SK-N-SH (cell line): ENCODE measurements at regions of chr12 and their contacts with region 1.

Region 1: GRCh38 chr12:65232476-65233077 is 45.9 kb upstream of the MSRB3 start:
- DNase-seq: peak; percentile 12
- H3K4me3 ChIP-seq: no peak overlapping the region
- H3K27ac ChIP-seq: no peak overlapping the region
- H3K4me1 ChIP-seq: no peaks in the 10 kb centered on the region; a peak in 1 of 4 replicates
- H3K27me3 ChIP-seq: no peaks in the 10 kb centered on the region
- CTCF ChIP-seq: peak; percentile 65
- EP300 ChIP-seq: no peak
- RAD21 ChIP-seq: peak; percentile 53

Region 2: DNA sequence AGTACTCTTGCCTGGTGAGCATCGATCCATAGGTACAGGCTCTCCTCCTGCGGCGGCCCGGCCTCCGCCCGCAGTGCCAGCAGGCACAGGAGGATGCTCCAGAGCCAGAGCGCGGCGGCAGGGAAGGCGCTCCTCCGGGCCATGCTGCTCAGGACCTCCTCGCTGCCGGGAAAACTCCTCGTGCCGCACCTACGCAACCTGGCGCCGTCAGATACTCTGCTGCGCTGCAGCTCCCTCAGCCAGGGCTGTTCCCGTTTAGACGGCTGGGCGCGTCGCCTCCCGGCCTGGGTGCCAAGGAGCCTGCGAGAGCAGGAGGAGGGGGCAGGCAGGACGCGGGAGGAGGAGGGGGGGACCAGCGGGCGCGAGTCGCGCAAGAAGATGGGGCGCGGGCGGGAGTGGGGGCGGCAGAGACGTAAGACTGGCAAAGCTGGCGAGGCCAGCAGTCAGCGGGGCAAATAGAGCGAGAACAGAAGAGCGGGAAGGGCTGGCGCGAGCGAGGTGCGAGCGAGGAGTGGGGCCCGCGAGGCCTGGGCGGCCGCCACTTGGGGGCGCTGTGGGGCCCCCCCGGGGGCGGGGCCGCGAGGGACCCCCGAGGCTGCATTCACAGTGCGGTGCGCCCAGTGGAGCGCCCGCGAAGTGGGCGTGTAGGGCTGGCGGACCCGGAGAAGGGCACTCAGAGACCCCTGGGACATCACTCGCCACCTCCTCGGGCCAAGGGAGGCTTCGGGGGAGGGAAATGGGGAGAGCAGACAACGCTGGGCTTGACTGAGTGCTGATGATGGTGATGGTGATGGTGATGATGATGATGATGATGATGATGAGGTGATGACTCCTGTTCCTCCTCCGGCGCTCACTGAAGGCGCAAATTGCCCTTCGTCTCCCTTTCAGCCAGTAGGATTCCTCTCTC is 111.3 kb before region 1 on chr12 and contains the start of gene WIF1:
- CTCF ChIA-PET with region 1: interaction called, 14 read pairs
- POLR2A ChIA-PET with region 1: no interaction called
- DNase-seq: peak; percentile 69
- H3K4me3 ChIP-seq: peak within 1 kb of the TSS; percentile 14 to 37; a peak in 3 of 4 replicates
- H3K27ac ChIP-seq: no peak within 1 kb of the TSS
- H3K4me1 ChIP-seq: no peaks in the 10 kb centered on the region; a peak in 1 of 4 replicates
- H3K27me3 ChIP-seq: peaks cover 68% of the 10 kb centered on the region
- CTCF ChIP-seq: peak; percentile 56
- EP300 ChIP-seq: no peak
- RAD21 ChIP-seq: no peak
- polyA plus RNA-seq, gene WIF1: not detected in 2 replicates

Region 3: GRCh38 chr12:65217086-65217485 is 15.5 kb before region 1 on chr12:
- CTCF ChIA-PET with region 1: interaction called, 16 read pairs
- POLR2A ChIA-PET with region 1: no interaction called
- DNase-seq: peak; percentile 34
- H3K4me3 ChIP-seq: no peak overlapping the region
- H3K27ac ChIP-seq: peak overlapping the region in 1 of 2 experiments; percentile 25; a peak in 1 of 4 replicates
- H3K4me1 ChIP-seq: peaks cover 0 to 6% of the 10 kb centered on the region in 2 experiments; a peak in 1 of 4 replicates
- H3K27me3 ChIP-seq: no peaks in the 10 kb centered on the region
- CTCF ChIP-seq: no peak
- EP300 ChIP-seq: peak in 1 of 2 experiments; percentile 60; a peak in 2 of 4 replicates
- RAD21 ChIP-seq: no peak